ENCODE measurements at regions of chr12 and their contacts with region 1.

Region 1: DNA sequence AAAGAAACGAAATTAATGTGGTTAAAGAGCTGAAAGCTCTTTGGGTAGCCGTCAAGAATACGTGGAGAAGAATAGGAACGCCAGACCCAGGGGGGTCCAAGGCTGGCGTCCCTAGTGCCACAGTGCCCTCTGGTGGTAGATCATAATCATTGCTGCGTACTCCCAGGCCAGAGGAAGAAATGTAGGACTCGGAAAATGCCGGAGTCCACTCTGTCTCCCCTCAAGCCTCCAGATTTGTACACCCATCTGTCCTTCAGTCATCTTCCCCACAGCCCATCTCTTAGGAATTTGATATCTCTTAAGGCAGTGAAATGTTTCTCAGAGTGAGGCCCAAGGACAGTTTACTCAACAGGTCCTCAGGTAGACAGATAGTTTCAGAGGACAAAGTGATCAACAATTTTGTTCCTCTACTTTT is 25.4 kb upstream of the PLEKHG6 start:
- DNase-seq: peak; percentile 33 to 70 (median 56)
- ATAC-seq: peak; percentile 90
- H3K4me3 ChIP-seq: no peak overlapping the region
- H3K4me3 Mint-ChIP-seq: no peak overlapping the region
- H3K27ac ChIP-seq: no peak overlapping the region
- H3K27ac Mint-ChIP-seq: peak overlapping the region in 1 of 9 donors; percentile 20
- H3K4me1 ChIP-seq: no peaks in the 10 kb centered on the region
- H3K4me1 Mint-ChIP-seq: peaks cover 0 to 6% (median 4%) of the 10 kb centered on the region in 7 donors
- H3K27me3 ChIP-seq: peaks cover 0 to 2% of the 10 kb centered on the region in 2 donors
- H3K27me3 Mint-ChIP-seq: peaks cover 0 to 19% (median 13%) of the 10 kb centered on the region in 5 donors

Region 2: DNA sequence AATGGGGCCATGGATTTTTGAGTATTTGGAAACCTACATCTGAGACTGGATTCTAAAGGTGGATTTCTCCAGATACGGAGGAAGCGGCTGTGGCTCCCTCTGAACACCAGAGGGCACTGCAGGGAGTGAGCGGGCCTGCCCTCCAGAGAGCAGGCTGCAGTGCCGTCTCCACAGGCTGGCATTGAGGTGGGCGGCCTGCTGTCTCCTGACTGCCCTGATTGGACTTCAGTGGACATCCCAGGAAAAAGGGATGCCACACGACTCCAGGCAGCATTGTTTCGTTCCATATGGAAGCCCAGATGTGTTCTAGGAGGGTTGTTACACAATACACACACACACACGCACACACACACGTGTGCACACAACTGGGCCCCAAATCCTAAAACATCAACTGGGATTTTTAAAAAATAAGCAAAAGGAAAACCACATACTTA is 319.1 kb before region 1 on chr12:
- CTCF ChIA-PET with region 1: no interaction called
- POLR2A ChIA-PET with region 1: no interaction called
- intact Hi-C with region 1: loop called in 1 of 2 experiments (anchors 1 kb)
- DNase-seq: peak in 8 of 9 donors; percentile 21 to 47 (median 30)
- ATAC-seq: peak; percentile 83
- H3K4me3 ChIP-seq: no peak overlapping the region
- H3K4me3 Mint-ChIP-seq: no peak overlapping the region
- H3K27ac ChIP-seq: no peak overlapping the region
- H3K27ac Mint-ChIP-seq: no peak overlapping the region
- H3K4me1 ChIP-seq: no peaks in the 10 kb centered on the region
- H3K4me1 Mint-ChIP-seq: peaks cover 0 to 4% (median 0%) of the 10 kb centered on the region in 7 donors
- H3K27me3 ChIP-seq: no peaks in the 10 kb centered on the region
- H3K27me3 Mint-ChIP-seq: peaks cover 3 to 15% (median 8%) of the 10 kb centered on the region in 5 donors

Region 3: DNA sequence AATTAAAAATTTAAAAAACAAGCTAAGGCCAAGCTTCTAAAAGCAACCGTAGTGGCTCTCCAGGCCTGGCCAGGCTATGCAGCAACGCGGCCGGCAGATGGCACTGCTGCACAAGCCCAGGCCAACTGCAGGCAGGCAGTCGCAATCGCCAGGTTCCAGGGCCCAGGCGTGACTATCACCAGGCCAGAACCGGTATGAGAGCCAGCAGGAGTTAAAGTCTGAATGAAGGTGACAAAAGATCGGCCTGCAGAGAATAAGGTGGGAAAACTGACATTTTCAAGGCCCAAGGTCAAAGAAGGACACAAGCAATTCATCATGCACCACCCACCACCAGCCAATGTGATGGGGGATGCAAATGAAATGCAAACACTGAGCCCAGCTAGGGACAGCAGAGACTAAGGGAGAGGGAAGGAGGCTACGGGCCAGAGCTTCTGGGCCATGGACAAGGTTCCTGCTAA is 296.4 kb before region 1 on chr12:
- CTCF ChIA-PET with region 1: interaction called, 37 read pairs
- POLR2A ChIA-PET with region 1: no interaction called
- intact Hi-C with region 1: loop called (anchors 1 kb)
- DNase-seq: peak; percentile 30 to 76 (median 68)
- ATAC-seq: peak; percentile 92
- H3K4me3 ChIP-seq: no peak overlapping the region
- H3K4me3 Mint-ChIP-seq: no peak overlapping the region
- H3K27ac ChIP-seq: no peak overlapping the region
- H3K27ac Mint-ChIP-seq: no peak overlapping the region
- H3K4me1 ChIP-seq: no peaks in the 10 kb centered on the region
- H3K4me1 Mint-ChIP-seq: peaks cover 0 to 3% (median 0%) of the 10 kb centered on the region in 7 donors
- H3K27me3 ChIP-seq: no peaks in the 10 kb centered on the region
- H3K27me3 Mint-ChIP-seq: peaks cover 0 to 2% (median 0%) of the 10 kb centered on the region in 5 donors

Region 4: GRCh38 chr12:6154730-6155459 is 130.2 kb before region 1 on chr12:
- CTCF ChIA-PET with region 1: no interaction called
- POLR2A ChIA-PET with region 1: no interaction called
- intact Hi-C with region 1: no loop called
- DNase-seq: no peak
- ATAC-seq: no peak
- H3K4me3 ChIP-seq: no peak overlapping the region
- H3K4me3 Mint-ChIP-seq: no peak overlapping the region
- H3K27ac ChIP-seq: no peak overlapping the region
- H3K27ac Mint-ChIP-seq: no peak overlapping the region
- H3K4me1 ChIP-seq: no peaks in the 10 kb centered on the region
- H3K4me1 Mint-ChIP-seq: peaks cover 0 to 14% (median 6%) of the 10 kb centered on the region in 7 donors
- H3K27me3 ChIP-seq: no peaks in the 10 kb centered on the region
- H3K27me3 Mint-ChIP-seq: peaks cover 0 to 7% (median 0%) of the 10 kb centered on the region in 5 donors

Region 5: GRCh38 chr12:7108796-7109571 is 823.9 kb after region 1 on chr12 and contains the start of gene C1RL:
- CTCF ChIA-PET with region 1: no interaction called
- POLR2A ChIA-PET with region 1: no interaction called
- intact Hi-C with region 1: no loop called
- DNase-seq: peak; percentile 50 to 88 (median 65)
- ATAC-seq: peak; percentile 69
- H3K4me3 ChIP-seq: peak within 1 kb of the TSS; percentile 95
- H3K4me3 Mint-ChIP-seq: peak within 1 kb of the TSS; percentile 90 to 98 (median 94)
- H3K27ac ChIP-seq: peak within 1 kb of the TSS; percentile 79
- H3K27ac Mint-ChIP-seq: peak within 1 kb of the TSS; percentile 84 to 95 (median 93)
- H3K4me1 ChIP-seq: peaks cover 6% of the 10 kb centered on the region in 2 donors
- H3K4me1 Mint-ChIP-seq: peaks cover 29 to 64% (median 43%) of the 10 kb centered on the region in 7 donors
- H3K27me3 ChIP-seq: no peaks in the 10 kb centered on the region
- H3K27me3 Mint-ChIP-seq: no peaks in the 10 kb centered on the region
- total RNA-seq, gene C1RL: 18.5 to 38.6 (median 24.4) TPM

Measured in naive thymus-derived CD4-positive, alpha-beta T cell (primary cell).